Spleen (tissue), 13 donors: ENCODE measurements at regions of chr10 and their contacts with region 1.

Region 1: DNA sequence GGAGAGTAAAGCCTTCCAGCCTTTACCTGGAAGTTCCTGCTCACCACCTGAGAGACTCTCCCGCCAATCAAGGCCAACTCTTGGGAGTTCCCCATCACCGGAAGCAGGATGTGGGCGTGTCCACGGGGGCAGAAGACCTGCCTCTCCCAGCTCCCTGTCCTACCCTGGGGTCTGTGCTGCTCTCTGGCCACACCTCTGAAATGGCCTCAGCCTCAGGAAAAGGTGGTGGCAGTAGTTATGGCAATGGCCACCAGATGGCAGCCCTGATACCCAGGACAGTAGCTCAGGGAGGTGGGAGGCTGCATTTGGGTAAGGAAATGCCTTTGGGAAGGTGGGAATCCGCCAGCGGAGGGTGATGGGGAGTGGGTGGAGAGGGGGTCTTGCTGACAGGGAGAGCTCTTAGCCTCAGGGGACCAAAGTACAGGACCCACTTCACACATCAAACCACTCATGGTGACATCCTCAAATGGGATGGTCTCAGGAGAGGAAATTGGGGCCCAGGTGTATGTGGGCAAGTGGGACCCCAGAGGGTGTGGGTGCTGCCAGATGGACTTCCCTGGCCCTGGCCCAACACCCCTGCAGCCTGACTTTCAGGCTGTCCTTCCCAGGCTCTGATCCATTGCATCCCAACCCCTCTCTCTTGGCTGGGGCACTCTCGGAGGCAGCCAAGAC is 33.9 kb downstream of the KAZALD1 start:
- DNase-seq: peak; percentile 82
- H3K4me3 ChIP-seq: peak overlapping the region in 2 of 8 donors; percentile 4 to 12
- H3K27ac ChIP-seq: peak overlapping the region in 6 of 8 donors; percentile 20 to 82 (median 62)
- H3K4me1 ChIP-seq: peaks cover 0 to 32% (median 15%) of the 10 kb centered on the region in 6 donors
- H3K27me3 ChIP-seq: peaks cover 0 to 95% (median 6%) of the 10 kb centered on the region in 7 donors
- CTCF ChIP-seq: peak; percentile 73 to 91 (median 81)
- POLR2A ChIP-seq: no peak

Region 2: GRCh38 chr10:101141616-101142532 is 46.2 kb after region 1 on chr10:
- intact Hi-C with region 1: loop called (anchors 2 kb)
- DNase-seq: peak; percentile 94
- H3K4me3 ChIP-seq: peak overlapping the region in 5 of 8 donors; percentile 4 to 67 (median 46)
- H3K27ac ChIP-seq: peak overlapping the region in 6 of 8 donors; percentile 29 to 87 (median 81)
- H3K4me1 ChIP-seq: peaks cover 0 to 64% (median 31%) of the 10 kb centered on the region in 6 donors
- H3K27me3 ChIP-seq: peaks cover 5 to 100% (median 88%) of the 10 kb centered on the region in 7 donors
- CTCF ChIP-seq: peak; percentile 86 to 98 (median 93)
- POLR2A ChIP-seq: no peak